Aorta (tissue), 5 donors: ENCODE measurements at regions of chr3 and their contacts with region 1.

Region 1: GRCh38 chr3:48847504-48848423 is at the start of gene PRKAR2A:
- DNase-seq: peak; percentile 93 to 97
- ATAC-seq: peak; percentile 97
- H3K4me3 ChIP-seq: peak within 1 kb of the TSS; percentile 52 to 80
- H3K27ac ChIP-seq: peak within 1 kb of the TSS; percentile 36 to 96
- H3K4me1 ChIP-seq: peaks cover 0 to 7% of the 10 kb centered on the region in 2 donors
- H3K27me3 ChIP-seq: no peaks in the 10 kb centered on the region
- total RNA-seq, gene PRKAR2A: 52.8 to 59.6 TPM

Region 2: DNA sequence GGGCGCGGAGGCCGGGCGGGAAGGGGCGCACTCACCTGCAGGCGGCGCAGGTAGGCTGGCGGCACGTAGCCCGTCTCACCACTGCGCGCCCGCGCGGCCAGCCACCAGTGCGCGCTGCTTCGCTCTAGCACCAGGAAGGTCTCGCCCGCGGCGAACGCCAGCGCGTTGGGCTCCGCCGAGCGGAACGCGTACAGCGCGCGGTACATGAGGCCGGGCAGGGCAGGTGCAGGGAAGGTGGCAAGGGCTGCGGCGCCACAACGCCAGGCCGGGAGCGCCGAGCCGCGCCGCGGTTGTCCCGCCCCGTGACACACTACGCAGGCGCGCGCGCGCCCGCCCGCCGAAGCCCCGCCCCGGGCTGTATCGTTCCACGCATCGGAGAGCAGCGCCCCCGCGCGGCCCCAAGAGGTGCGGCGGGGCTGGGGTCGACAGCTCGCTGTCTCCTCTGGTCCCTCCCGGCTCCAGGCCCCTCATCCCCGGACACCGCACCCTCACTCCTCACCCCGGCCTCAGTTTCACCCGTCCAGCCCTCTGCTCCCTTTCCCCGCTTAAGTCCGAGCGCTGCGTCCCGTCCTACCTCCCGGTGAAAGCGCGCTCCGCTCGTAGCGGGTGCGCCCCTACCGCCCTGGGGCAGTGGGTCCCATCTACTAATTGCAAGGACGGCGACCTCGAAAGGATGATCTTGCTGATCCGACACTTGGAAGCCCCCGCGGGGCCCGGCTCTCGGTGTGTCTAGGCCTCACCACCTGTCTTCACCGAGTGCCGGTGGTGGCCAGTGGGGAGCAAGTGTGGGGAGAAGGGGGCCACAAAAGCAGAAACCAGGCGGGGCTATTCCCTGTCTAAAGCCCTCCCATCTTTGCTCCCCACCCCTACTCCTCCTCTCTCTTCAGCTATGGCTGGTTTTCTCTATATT is 161.9 kb before region 1 on chr3 and contains the start of gene NCKIPSD:
- intact Hi-C with region 1: loop called in 1 of 2 experiments (anchors 5 kb)
- DNase-seq: peak; percentile 93 to 98
- ATAC-seq: peak; percentile 96
- H3K4me3 ChIP-seq: peak within 1 kb of the TSS; percentile 57 to 79
- H3K27ac ChIP-seq: peak within 1 kb of the TSS in 1 of 2 donors; percentile 60
- H3K4me1 ChIP-seq: no peaks in the 10 kb centered on the region
- H3K27me3 ChIP-seq: no peaks in the 10 kb centered on the region
- total RNA-seq, gene NCKIPSD: 26.4 to 31.9 TPM

Region 3: DNA sequence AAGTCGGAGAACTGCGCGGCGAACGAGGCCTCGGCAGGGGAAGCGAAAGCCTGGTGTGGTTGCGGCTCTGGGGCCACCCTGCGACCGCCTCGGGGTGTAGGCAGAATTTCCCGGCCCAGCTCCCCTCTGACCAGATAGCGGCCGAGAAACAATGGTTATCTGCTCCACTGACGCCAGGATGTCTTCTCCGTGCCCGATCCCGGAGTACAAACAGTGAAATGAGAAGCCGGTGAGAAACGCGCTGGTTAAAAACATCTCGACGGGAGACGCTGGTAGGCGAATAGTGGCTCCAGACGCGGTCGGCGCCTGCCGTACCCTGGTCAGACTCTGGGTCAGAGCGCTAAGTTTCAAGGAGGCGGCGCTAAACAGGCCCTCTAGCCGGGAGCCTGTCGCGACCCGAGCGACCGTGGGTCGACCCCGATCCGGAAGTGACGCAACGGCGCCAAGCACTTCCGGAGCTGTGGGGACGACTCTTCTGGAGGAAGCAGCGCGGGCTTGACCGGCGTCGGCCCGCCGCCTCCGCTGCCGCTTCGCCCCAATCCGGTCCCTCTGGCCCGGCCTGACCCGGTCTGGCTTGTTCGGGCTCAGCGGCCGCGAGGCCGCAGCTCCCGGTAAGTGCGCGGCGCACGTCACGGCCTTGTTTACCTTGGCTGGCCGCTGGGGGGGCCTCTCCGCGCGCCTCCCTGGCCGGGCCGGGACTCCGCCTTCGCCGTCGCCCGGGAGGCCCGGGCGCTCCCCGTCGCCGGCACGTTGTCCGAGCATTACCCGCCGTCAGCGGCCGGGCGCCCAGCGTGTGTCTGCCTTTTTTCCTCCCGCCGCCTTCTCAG is 70.8 kb after region 1 on chr3 and contains the start of gene ARIH2:
- intact Hi-C with region 1: loop called in 1 of 2 experiments (anchors 5 kb)
- DNase-seq: peak; percentile 95 to 98
- ATAC-seq: peak; percentile 98
- H3K4me3 ChIP-seq: peak within 1 kb of the TSS; percentile 63 to 86
- H3K27ac ChIP-seq: peak within 1 kb of the TSS; percentile 46 to 94
- H3K4me1 ChIP-seq: no peaks in the 10 kb centered on the region
- H3K27me3 ChIP-seq: no peaks in the 10 kb centered on the region
- total RNA-seq, gene ARIH2: 84.1 to 89.4 TPM

Region 4: DNA sequence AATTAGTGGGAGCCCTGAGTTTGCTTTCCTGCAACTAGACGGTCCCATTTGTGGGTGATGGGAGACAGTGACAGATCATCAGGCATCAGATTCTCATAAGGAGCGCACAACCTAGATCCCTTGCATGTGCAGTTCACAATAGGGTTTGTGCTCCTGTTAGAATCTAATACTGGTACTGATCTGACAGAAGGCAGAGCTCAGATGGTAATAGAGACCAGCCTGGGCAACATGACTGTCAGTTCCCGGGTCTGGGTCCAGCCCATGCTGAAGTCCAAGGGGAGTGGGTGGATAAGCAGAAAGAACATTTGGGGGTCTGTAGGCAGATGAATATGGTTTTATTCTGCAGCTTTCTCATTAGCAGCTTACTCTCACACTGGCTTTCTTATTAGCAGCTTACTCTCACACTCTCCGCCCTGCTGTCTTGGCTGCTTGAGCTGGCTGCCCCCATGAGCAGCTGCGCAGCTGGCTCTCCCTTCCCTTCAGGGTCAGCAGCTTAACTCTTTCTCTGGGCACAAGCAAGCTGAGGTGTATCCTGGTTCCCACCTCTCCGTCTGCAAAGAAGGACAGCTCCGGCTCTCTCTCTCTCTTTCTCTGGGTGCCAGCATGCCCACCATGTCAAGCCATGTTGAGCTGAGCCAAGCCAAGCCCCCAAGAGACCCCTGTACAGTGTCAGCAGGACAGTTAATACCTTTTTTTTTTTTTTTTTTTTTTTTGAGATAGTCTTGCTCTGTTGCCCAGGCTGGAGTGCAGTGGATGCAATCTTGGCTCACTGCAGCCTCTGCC is 370.1 kb after region 1 on chr3:
- intact Hi-C with region 1: no loop called
- DNase-seq: peak in 1 of 2 donors; percentile 53
- ATAC-seq: peak; percentile 74
- H3K4me3 ChIP-seq: no peak overlapping the region
- H3K27ac ChIP-seq: peak overlapping the region in 1 of 2 donors; percentile 60
- H3K4me1 ChIP-seq: peaks cover 0 to 2% of the 10 kb centered on the region in 2 donors
- H3K27me3 ChIP-seq: no peaks in the 10 kb centered on the region